Activated naive CD4-positive, alpha-beta T cell treated with anti-CD3 and anti-CD28 coated beads for 36 hours (primary cell): ENCODE measurements at regions of chr13 and their contacts with region 1.

Region 1: GRCh38 chr13:110593430-110594130 is 21.8 kb upstream of the NAXD start:
- DNase-seq: peak; percentile 21
- H3K4me3 Mint-ChIP-seq: no peak overlapping the region
- H3K27ac Mint-ChIP-seq: no peak overlapping the region
- H3K4me1 Mint-ChIP-seq: peaks cover 3% of the 10 kb centered on the region
- H3K27me3 Mint-ChIP-seq: no peaks in the 10 kb centered on the region

Region 2: DNA sequence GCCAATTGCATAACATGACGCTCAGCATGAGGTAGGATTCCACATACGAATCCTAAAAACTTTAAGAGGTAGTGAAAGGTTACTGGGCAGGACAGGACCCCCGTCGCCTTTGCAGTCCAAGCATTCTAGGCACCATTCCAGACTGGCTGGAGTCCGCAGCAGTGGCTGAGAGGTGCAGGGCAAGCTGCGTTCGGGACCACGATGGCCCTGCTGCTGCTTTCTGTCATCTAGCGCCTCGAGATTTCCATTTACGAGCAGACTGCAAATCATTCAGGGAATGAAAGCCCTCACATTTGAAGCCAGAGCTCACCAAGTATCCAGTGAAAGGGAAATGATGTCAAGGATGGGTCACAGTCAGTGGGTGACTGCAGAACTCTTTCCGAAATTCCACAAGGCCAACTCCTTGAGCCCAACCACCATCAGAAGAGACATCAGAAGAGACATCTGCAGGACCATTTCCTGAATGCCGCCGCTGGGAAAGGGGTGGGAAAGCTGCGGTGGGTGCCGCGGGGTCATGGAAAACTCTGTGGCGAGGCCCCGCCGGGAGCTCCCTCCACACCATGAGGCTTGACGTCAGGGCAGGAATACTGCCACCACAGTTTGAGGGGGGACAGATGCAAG is 374.9 kb before region 1 on chr13:
- CTCF ChIA-PET with region 1: no interaction called
- intact Hi-C with region 1: loop called (anchors 5 kb)
- DNase-seq: no peak
- H3K4me3 Mint-ChIP-seq: no peak overlapping the region
- H3K27ac Mint-ChIP-seq: no peak overlapping the region
- H3K4me1 Mint-ChIP-seq: no peaks in the 10 kb centered on the region
- H3K27me3 Mint-ChIP-seq: peaks cover 16% of the 10 kb centered on the region

Region 3: DNA sequence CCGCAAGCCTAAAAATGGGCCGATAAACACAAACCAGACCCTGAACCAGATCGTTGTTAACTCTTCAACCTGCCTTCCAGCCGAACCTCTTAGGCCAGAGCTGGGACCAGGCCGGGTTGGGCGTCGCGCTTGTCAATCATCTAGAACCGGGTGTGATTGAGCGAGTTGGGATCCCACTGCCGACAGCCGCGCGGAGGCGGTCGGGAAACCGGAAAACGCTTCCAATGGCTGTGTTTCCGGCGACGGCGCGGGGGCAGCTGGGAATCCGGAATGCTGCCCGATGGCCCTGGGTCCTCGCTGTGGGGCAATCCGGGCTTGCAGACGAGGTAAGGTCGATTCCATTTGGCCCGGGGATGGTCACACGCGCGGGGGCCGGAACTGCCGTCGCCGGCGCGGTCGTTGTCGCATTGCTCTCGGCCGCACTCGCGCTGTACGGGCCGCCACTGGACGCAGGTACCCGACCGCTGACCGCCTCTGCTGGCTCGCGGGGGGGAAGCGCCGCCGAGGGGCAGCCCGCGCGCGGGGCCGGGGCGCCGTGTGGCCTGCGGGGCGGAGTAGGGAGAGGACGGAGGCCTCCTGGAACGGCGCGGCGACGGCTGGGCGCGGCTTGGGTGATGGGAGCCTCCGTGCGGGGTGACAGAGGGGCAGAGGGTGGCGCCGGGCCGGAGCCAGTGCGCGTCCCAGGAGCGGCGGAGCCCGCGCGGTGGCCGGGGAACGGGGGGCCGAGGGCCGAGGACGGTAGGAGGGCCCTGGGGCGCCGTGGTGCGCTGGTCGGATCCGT is 21.9 kb after region 1 on chr13 and contains the start of gene NAXD:
- CTCF ChIA-PET with region 1: interaction called, 16 read pairs
- intact Hi-C with region 1: no loop called
- DNase-seq: peak; percentile 94
- H3K4me3 Mint-ChIP-seq: peak within 1 kb of the TSS; percentile 89
- H3K27ac Mint-ChIP-seq: peak within 1 kb of the TSS; percentile 89
- H3K4me1 Mint-ChIP-seq: peaks cover 40% of the 10 kb centered on the region
- H3K27me3 Mint-ChIP-seq: no peaks in the 10 kb centered on the region
- total RNA-seq, gene NAXD: 20.8 to 23.3 TPM

Region 4: DNA sequence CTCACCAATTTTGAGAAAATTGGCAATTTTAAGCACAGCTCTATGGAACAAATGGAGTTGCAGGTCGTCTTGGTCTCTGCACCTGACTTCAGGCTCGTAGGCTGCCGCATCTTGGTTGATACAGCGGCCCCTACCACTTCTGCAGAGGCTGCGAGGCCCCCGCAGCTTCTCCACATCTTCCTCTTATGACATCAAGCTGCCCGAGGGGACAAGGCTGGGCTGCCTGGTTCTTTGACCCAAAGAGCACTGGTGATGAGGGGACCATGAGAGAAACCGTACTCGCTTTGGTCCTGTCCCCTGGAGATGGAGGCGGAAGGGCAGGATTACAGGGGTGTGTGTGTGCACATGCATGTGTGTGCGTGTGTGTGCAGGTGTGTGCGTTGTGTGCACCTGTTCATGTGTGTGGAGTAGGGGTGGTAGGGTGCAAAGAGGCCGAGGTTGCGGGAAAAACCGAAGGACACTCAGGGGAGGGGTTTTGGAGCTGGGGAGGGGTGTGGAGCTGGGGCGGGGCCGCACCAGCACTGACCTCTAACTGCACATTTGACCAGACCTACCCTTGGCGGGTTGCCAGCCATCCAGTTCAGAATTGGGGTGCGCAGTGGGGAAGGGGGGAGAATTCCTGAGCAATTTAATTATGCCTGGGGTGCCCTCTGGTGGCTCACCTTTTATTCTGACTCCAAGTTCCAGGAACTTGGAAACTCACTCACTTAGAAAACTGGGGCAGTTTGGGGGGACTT is 456.4 kb after region 1 on chr13:
- CTCF ChIA-PET with region 1: no interaction called
- intact Hi-C with region 1: loop called (anchors 5 kb)
- DNase-seq: peak; percentile 21
- H3K4me3 Mint-ChIP-seq: no peak overlapping the region
- H3K27ac Mint-ChIP-seq: no peak overlapping the region
- H3K4me1 Mint-ChIP-seq: no peaks in the 10 kb centered on the region
- H3K27me3 Mint-ChIP-seq: peaks cover 7% of the 10 kb centered on the region